ENCODE measurements at regions of chr5 and their contacts with region 1.

Region 1: GRCh38 chr5:141835928-141836670 is 42.1 kb downstream of the PCDH1 start:
- DNase-seq: peak; percentile 69 to 86
- ATAC-seq: peak; percentile 64 to 84 (median 76)
- H3K4me3 ChIP-seq: peak overlapping the region in 7 of 10 donors; percentile 2 to 27 (median 9)
- H3K27ac ChIP-seq: peak overlapping the region; percentile 64 to 91 (median 82)
- H3K4me1 ChIP-seq: peaks cover 12 to 87% (median 64%) of the 10 kb centered on the region in 9 donors
- H3K27me3 ChIP-seq: peaks cover 0 to 19% (median 0%) of the 10 kb centered on the region in 7 donors
- CTCF ChIP-seq: no peak

Region 2: GRCh38 chr5:141701360-141702119 is 134.6 kb before region 1 on chr5:
- intact Hi-C with region 1: no loop called
- DNase-seq: peak in 1 of 2 donors; percentile 42
- ATAC-seq: peak in 5 of 8 donors; percentile 34 to 64 (median 45)
- H3K4me3 ChIP-seq: peak overlapping the region in 9 of 10 donors; percentile 39 to 69 (median 58)
- H3K27ac ChIP-seq: peak overlapping the region in 4 of 10 donors; percentile 16 to 66 (median 32)
- H3K4me1 ChIP-seq: peaks cover 3 to 24% (median 16%) of the 10 kb centered on the region in 9 donors
- H3K27me3 ChIP-seq: peaks cover 0 to 72% (median 22%) of the 10 kb centered on the region in 7 donors
- CTCF ChIP-seq: no peak

Region 3: GRCh38 chr5:141787376-141787775 is 48.7 kb before region 1 on chr5:
- intact Hi-C with region 1: no loop called
- DNase-seq: no peak
- ATAC-seq: no peak
- H3K4me3 ChIP-seq: no peak overlapping the region
- H3K27ac ChIP-seq: no peak overlapping the region
- H3K4me1 ChIP-seq: peaks cover 0 to 21% (median 0%) of the 10 kb centered on the region in 9 donors
- H3K27me3 ChIP-seq: peaks cover 0 to 15% (median 0%) of the 10 kb centered on the region in 7 donors
- CTCF ChIP-seq: no peak

Region 4: GRCh38 chr5:141870871-141871270 is 34.8 kb after region 1 on chr5:
- intact Hi-C with region 1: loop called in 4 of 10 experiments (anchors 5 kb)
- DNase-seq: no peak
- ATAC-seq: peak in 3 of 8 donors; percentile 28 to 41 (median 41)
- H3K4me3 ChIP-seq: peak overlapping the region in 1 of 10 donors; percentile 2
- H3K27ac ChIP-seq: peak overlapping the region in 4 of 10 donors; percentile 6 to 97 (median 32)
- H3K4me1 ChIP-seq: peaks cover 0 to 90% (median 33%) of the 10 kb centered on the region in 9 donors
- H3K27me3 ChIP-seq: peaks cover 0 to 39% (median 23%) of the 10 kb centered on the region in 7 donors
- CTCF ChIP-seq: no peak

Region 5: DNA sequence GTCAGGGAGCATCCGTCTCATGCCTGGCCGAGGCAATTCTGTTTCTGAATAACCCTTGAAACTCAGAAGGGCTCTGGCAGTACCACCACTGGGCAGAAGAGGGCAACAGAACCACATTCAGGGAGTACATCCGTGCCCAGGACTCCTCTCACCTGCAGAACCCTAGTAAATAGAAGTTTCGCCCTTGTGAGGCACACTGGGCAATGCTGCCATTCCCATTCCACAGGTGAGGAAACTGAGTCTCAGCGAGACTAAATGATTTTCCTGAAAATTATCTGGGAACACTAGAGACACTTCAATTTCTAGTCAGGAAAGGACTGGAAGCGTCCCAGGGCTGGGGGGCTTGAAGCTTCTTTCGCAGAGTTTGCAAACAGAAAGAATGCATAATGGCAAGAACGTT is 775.1 kb after region 1 on chr5:
- intact Hi-C with region 1: no loop called
- DNase-seq: peak; percentile 63 to 81
- ATAC-seq: peak; percentile 75 to 88 (median 86)
- H3K4me3 ChIP-seq: no peak overlapping the region
- H3K27ac ChIP-seq: peak overlapping the region in 1 of 10 donors; percentile 5
- H3K4me1 ChIP-seq: peaks cover 0 to 37% (median 3%) of the 10 kb centered on the region in 9 donors
- H3K27me3 ChIP-seq: peaks cover 0 to 3% (median 0%) of the 10 kb centered on the region in 7 donors
- CTCF ChIP-seq: peak; percentile 91 to 97 (median 93)